ENCODE measurements at regions of chr6 and their contacts with region 1.

Region 1: GRCh38 chr6:37207903-37208456 is 38.0 kb downstream of the PIM1 start:
- DNase-seq: peak; percentile 93
- H3K4me3 Mint-ChIP-seq: peak overlapping the region; percentile 6
- H3K27ac Mint-ChIP-seq: peak overlapping the region; percentile 86
- H3K4me1 Mint-ChIP-seq: peaks cover 76% of the 10 kb centered on the region
- H3K27me3 Mint-ChIP-seq: no peaks in the 10 kb centered on the region

Region 2: GRCh38 chr6:36885461-36886401 is 322.2 kb before region 1 on chr6 and contains the start of gene C6orf89:
- CTCF ChIA-PET with region 1: interaction called, 15 read pairs
- POLR2A ChIA-PET with region 1: no interaction called
- DNase-seq: peak; percentile 99
- H3K4me3 Mint-ChIP-seq: peak within 1 kb of the TSS; percentile 90
- H3K27ac Mint-ChIP-seq: peak within 1 kb of the TSS; percentile 94
- H3K4me1 Mint-ChIP-seq: peaks cover 38% of the 10 kb centered on the region
- H3K27me3 Mint-ChIP-seq: no peaks in the 10 kb centered on the region
- total RNA-seq, gene C6orf89: 47.5 to 58.1 TPM

Region 3: GRCh38 chr6:37029249-37029971 is 178.6 kb before region 1 on chr6:
- CTCF ChIA-PET with region 1: interaction called, 482 read pairs
- POLR2A ChIA-PET with region 1: no interaction called
- DNase-seq: peak; percentile 44
- H3K4me3 Mint-ChIP-seq: no peak overlapping the region
- H3K27ac Mint-ChIP-seq: peak overlapping the region; percentile 79
- H3K4me1 Mint-ChIP-seq: peaks cover 74% of the 10 kb centered on the region
- H3K27me3 Mint-ChIP-seq: no peaks in the 10 kb centered on the region

Region 4: DNA sequence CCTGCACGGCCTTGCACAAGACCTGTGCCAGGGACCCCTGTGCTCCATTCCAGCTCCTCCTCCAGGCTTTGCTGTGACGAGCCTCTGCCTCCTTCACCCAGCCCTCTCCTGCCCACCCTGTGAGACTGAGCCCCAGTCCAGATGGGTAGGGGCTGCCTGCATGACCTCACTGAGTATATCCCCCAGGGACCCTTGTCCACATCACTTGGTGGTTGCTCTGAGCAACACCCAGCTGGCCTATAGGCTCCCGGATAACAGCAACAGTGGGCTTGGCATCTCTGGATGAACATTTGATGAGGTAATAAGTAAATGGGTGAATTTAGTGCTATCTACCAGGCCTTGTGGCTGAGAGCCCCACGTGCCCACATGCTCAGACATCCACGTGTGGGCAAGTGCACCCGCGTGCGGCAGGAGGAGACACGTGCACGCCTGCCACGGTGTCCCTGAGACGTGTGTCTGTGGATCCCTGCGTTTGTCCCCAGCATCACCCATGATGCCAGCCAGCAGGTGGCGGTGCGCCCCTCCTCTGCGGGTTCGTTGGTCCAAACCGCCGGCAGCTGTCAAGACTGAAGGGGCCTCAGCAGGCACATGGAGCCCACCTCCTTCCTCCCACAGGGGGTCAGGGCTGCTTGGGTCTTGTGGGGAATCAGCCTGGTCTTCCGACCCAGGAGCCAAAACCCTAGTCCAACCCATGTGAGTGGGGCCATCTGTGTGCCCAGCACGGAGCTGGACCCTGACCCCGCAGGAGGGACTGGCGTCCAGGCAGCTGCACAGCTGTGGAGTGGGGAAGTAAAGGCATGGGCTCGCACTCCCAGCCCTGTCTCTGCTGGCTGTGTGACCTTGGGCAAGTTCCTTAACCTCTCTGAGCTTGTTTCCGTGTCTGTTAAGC is 156.6 kb before region 1 on chr6:
- CTCF ChIA-PET with region 1: interaction called, 73 read pairs
- POLR2A ChIA-PET with region 1: interaction called, 10 read pairs
- DNase-seq: peak; percentile 91
- H3K4me3 Mint-ChIP-seq: peak overlapping the region; percentile 76
- H3K27ac Mint-ChIP-seq: peak overlapping the region; percentile 92
- H3K4me1 Mint-ChIP-seq: peaks cover 75% of the 10 kb centered on the region
- H3K27me3 Mint-ChIP-seq: no peaks in the 10 kb centered on the region

Region 5: GRCh38 chr6:37190159-37190535 is 17.8 kb before region 1 on chr6:
- CTCF ChIA-PET with region 1: interaction called, 26 read pairs
- POLR2A ChIA-PET with region 1: interaction called, 4 read pairs
- DNase-seq: no peak
- H3K4me3 Mint-ChIP-seq: no peak overlapping the region
- H3K27ac Mint-ChIP-seq: peak overlapping the region; percentile 81
- H3K4me1 Mint-ChIP-seq: peaks cover 77% of the 10 kb centered on the region
- H3K27me3 Mint-ChIP-seq: no peaks in the 10 kb centered on the region

Region 6: DNA sequence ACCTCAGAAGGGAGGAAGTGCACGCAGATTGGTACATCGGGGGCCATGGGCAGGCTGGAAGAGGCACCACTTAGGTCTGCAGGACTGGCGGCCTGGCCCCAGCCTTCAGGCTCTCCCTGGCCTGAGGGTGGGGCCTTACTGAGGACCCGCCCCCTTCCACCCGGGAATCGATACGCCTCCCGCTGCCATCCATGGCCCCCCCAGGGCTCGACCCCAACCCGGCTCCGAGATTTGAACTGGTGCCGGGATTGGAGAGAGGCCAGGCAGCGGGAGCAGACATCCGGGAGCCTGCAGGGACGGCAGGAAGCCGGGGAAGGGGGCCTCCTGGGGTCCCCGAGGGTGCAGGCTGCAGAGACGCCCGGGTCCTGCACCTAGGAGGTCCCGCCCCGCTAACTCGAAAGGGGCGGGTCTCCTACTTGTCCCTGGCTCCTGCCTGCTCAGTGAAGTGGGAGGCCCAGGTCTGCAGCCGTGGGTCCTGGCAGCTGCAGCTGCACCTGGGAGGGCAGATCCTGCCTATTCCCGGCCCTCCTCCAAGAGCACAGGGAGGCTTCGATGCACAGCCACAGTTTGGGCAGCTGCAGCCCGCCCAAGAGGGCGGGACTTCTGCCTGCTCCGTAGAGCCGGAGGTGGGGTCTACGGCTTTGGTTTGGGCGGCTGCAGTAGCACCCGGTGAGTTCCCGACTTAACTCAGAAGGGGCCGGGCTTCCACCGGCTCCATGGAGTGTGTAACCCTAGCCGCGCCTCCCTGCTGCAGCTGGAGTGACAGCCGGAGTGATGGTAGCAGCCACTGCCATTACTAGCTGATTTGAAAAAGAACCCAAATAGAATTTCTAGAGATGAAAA is 14.4 kb after region 1 on chr6:
- CTCF ChIA-PET with region 1: interaction called, 34 read pairs
- POLR2A ChIA-PET with region 1: interaction called, 4 read pairs
- DNase-seq: peak; percentile 82
- H3K4me3 Mint-ChIP-seq: peak overlapping the region; percentile 69
- H3K27ac Mint-ChIP-seq: peak overlapping the region; percentile 78
- H3K4me1 Mint-ChIP-seq: peaks cover 35% of the 10 kb centered on the region
- H3K27me3 Mint-ChIP-seq: no peaks in the 10 kb centered on the region